ENCODE measurements at regions of chr3 and their contacts with region 1.

Region 1: GRCh38 chr3:171459942-171460724 is at the start of gene TNIK:
- DNase-seq: peak; percentile 98
- H3K4me3 Mint-ChIP-seq: peak within 1 kb of the TSS; percentile 96
- H3K27ac Mint-ChIP-seq: peak within 1 kb of the TSS; percentile 91
- H3K4me1 Mint-ChIP-seq: peaks cover 46% of the 10 kb centered on the region
- H3K27me3 Mint-ChIP-seq: no peaks in the 10 kb centered on the region
- total RNA-seq, gene TNIK: 24.5 and 27.4 TPM in 2 replicates

Region 2: GRCh38 chr3:171162986-171163723 is 297.0 kb before region 1 on chr3:
- intact Hi-C with region 1: loop called (anchors 2 kb)
- DNase-seq: peak; percentile 70
- H3K4me3 Mint-ChIP-seq: no peak overlapping the region
- H3K27ac Mint-ChIP-seq: no peak overlapping the region
- H3K4me1 Mint-ChIP-seq: peaks cover 18% of the 10 kb centered on the region
- H3K27me3 Mint-ChIP-seq: no peaks in the 10 kb centered on the region

Region 3: GRCh38 chr3:171284308-171285075 is 175.6 kb before region 1 on chr3:
- intact Hi-C with region 1: loop called (anchors 2 kb)
- DNase-seq: no peak
- H3K4me3 Mint-ChIP-seq: peak overlapping the region; percentile 23
- H3K27ac Mint-ChIP-seq: peak overlapping the region; percentile 69
- H3K4me1 Mint-ChIP-seq: peaks cover 44% of the 10 kb centered on the region
- H3K27me3 Mint-ChIP-seq: no peaks in the 10 kb centered on the region

Region 4: GRCh38 chr3:171480526-171480925 is 20.4 kb after region 1 on chr3:
- intact Hi-C with region 1: loop called (anchors 1 kb)
- DNase-seq: peak; percentile 80
- H3K4me3 Mint-ChIP-seq: peak overlapping the region; percentile 47
- H3K27ac Mint-ChIP-seq: peak overlapping the region; percentile 76
- H3K4me1 Mint-ChIP-seq: peaks cover 18% of the 10 kb centered on the region
- H3K27me3 Mint-ChIP-seq: no peaks in the 10 kb centered on the region

Region 5: GRCh38 chr3:172106989-172107388 is 646.9 kb after region 1 on chr3:
- intact Hi-C with region 1: loop called (anchors 10 kb)
- DNase-seq: peak; percentile 91
- H3K4me3 Mint-ChIP-seq: peak overlapping the region; percentile 84
- H3K27ac Mint-ChIP-seq: peak overlapping the region; percentile 89
- H3K4me1 Mint-ChIP-seq: peaks cover 64% of the 10 kb centered on the region
- H3K27me3 Mint-ChIP-seq: peaks cover 4% of the 10 kb centered on the region